Caco-2 (cell line): ENCODE measurements at regions of chr5 and their contacts with region 1.

Region 1: DNA sequence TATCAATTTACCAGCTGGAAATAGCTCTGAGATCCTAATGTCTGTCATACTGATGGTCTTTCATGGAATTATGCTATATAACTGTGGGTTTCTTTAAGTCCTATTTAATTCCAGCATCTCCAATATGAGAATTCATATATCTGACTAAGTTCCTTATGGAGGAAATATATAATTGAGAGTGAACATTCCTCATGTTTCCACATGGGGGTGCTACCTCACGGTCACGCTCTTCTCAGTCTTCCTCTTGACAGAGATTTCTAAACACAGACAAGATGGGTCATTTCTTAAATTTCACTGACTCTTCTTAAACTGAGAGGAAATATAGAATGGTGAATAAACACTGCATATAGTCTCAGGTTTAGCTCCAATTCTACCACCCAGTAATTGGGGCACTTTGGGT is 212.1 kb downstream of the SLF1 start:
- DNase-seq: no peak
- H3K4me3 ChIP-seq: no peak overlapping the region
- H3K4me3 Mint-ChIP-seq: no peak overlapping the region
- H3K27ac Mint-ChIP-seq: no peak overlapping the region
- H3K4me1 ChIP-seq: no peaks in the 10 kb centered on the region
- H3K4me1 Mint-ChIP-seq: no peaks in the 10 kb centered on the region
- H3K27me3 ChIP-seq: no peaks in the 10 kb centered on the region
- H3K27me3 Mint-ChIP-seq: peaks cover 18% of the 10 kb centered on the region
- CTCF ChIP-seq: peak; percentile 28 to 37

Region 2: DNA sequence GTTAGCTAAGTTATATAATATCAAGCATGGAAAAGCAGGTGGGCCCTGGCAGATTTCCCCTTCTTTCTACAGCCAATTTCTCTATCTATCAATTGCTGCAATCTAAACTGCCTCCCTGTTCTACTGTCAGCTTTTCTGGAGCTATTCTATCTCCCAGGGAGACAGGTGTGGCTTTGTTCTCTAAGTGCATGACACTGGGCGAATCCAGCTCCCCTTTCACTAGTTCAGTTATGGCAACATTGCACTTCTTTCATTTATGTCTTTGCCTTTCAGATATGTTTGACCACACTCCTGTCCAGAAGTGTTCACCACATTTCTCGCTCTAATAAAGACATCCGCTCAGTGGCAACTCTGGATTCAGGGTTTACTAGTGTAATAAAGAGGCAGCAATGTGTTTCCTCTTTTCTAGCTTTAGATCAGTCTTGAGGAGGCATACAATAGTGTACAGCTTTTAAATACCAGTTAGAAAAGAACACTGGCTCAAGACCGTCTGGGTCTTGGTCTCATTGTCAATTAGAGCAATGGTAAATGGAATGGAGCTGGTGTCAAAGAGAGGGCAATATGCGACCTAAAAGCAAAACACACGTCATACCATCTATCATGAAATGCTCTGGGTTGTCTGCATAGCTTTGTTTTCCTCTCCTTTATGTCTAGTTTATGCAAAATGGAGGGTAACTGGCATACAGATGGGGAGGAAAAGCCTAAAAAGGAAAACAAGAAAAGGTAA is 15.0 kb before region 1 on chr5:
- CTCF ChIA-PET with region 1: no interaction called
- POLR2A ChIA-PET with region 1: no interaction called
- intact Hi-C with region 1: loop called (anchors 1 kb)
- DNase-seq: no peak
- H3K4me3 ChIP-seq: no peak overlapping the region
- H3K4me3 Mint-ChIP-seq: no peak overlapping the region
- H3K27ac Mint-ChIP-seq: no peak overlapping the region
- H3K4me1 ChIP-seq: no peaks in the 10 kb centered on the region
- H3K4me1 Mint-ChIP-seq: no peaks in the 10 kb centered on the region
- H3K27me3 ChIP-seq: no peaks in the 10 kb centered on the region
- H3K27me3 Mint-ChIP-seq: peaks cover 19% of the 10 kb centered on the region
- CTCF ChIP-seq: no peak

Region 3: DNA sequence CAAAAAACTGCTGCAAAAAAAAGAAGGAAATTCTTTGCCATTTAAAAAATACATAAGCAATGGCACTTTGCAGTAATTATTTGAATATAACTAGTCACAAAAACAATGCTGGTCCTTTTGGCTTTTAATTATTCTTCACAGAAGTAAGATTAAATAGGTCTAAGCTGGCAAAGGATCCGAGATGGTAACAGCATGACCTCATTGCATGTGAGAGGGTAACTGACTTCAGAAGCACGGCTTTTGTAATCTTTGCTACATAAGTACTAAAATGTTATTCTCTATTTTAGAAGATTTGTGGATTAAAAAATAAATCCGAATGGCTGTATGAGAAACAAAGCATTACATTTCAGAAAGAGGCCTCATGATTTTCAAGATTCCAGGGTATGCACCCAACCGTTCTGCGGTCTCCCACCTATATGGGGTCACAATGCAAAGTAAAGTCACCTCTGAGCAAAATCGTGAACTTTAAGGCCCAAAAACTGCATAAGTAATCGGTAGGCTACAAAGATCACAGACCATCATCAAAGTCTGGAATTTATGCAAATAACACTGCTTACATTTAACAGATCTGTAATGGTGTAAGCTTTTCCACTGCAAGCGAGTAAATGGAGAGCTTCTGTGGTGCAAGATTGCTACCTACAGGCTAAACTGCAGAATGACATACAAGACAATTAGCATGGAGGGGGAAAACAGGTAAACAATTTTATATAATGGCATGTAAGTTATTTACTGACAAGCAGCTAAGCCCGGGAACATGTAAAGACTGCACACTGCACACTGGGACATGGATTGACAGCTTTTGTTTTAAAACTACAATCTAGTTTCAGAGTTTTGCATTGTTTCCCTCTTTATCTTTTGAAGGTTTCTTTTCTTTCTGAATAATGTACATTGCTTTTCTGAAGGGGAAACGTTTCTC is 19.6 kb after region 1 on chr5:
- CTCF ChIA-PET with region 1: no interaction called
- POLR2A ChIA-PET with region 1: no interaction called
- intact Hi-C with region 1: loop called (anchors 1 kb)
- DNase-seq: peak in 1 of 2 experiments; percentile 44
- H3K4me3 ChIP-seq: no peak overlapping the region
- H3K4me3 Mint-ChIP-seq: no peak overlapping the region
- H3K27ac Mint-ChIP-seq: no peak overlapping the region
- H3K4me1 ChIP-seq: peaks cover 4% of the 10 kb centered on the region; the same call in 1 of the 2 replicates
- H3K4me1 Mint-ChIP-seq: no peaks in the 10 kb centered on the region
- H3K27me3 ChIP-seq: no peaks in the 10 kb centered on the region
- H3K27me3 Mint-ChIP-seq: peaks cover 15% of the 10 kb centered on the region
- CTCF ChIP-seq: peak; percentile 65 to 74

Region 4: DNA sequence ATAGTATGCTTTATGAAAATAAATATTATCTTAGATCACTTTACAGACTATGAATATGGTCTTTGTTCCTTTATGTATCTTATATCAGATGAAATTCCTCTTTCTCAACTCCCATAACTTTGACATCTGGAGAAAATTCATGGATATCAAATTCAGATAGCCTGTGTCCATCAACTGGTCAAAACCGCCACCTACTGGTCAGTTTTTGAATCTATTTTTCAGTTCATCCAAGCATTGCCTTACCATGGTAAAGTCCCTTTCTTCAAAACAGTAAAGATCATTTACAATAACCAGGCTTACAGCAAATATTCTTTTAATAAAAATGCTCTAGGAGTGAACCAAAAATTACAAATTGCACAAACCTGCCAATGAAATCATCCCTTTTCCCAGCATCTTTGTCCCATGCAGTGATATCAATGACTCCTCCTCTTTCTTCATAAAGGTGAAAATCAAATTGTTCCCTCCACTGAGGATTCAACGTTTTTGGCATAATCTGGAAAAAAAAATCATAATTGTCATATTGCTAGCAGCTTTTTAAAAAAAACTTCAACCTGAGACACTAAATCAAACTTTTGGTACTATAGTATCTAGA is 78.5 kb after region 1 on chr5:
- CTCF ChIA-PET with region 1: no interaction called
- POLR2A ChIA-PET with region 1: no interaction called
- intact Hi-C with region 1: loop called (anchors 1 kb)
- DNase-seq: peak in 1 of 2 experiments; percentile 50
- H3K4me3 ChIP-seq: no peak overlapping the region
- H3K4me3 Mint-ChIP-seq: no peak overlapping the region
- H3K27ac Mint-ChIP-seq: no peak overlapping the region
- H3K4me1 ChIP-seq: no peaks in the 10 kb centered on the region
- H3K4me1 Mint-ChIP-seq: no peaks in the 10 kb centered on the region
- H3K27me3 ChIP-seq: no peaks in the 10 kb centered on the region
- H3K27me3 Mint-ChIP-seq: peaks cover 3% of the 10 kb centered on the region
- CTCF ChIP-seq: peak; percentile 64 to 70